ENCODE measurements at regions of chr18 and their contacts with region 1.

Region 1: DNA sequence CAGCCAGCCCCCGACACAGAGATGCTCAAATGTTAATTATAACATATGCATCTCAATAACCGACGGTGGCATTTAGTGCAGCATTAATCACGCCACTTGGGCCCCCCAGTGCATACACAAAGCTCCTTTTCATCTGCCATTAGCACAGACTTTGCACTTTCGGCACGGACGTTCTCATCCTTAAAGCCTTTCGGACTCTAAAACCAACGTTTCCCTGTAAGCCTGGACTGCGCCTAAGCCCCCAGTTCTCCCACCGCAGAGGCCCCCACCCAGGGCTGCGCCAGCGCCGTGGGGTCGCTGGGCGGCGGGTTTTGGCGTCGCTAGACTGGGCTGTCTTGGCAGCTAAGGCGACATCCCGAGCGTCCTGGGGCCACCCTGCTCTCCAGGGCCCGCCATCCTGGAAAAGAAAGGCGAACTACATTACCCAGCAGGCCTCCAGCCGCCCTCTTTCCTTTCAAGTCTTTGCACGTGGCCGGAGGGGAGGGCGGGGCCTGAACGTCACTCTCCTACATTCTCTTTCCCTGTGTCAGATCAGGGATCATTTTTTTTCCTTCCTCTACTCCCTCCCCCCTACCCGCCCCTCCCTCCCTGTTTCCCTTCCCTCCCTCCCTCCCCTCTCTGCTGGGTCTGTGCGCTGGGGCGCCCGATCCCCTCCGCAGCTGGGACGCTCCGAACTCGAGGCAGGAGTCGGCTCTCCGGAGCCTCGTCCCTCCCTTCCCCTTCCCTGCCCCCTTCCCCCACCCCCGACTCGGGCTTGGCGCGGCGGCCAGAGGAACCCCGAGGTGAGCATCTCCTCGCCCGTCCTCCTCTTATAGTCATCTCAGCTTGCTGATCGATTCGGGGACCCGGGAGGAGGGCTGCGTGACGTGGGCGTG is at the start of gene CTIF:
- DNase-seq: peak; percentile 94

Region 2: GRCh38 chr18:48629730-48630324 is 91.1 kb after region 1 on chr18:
- in situ Hi-C with region 1: loop called (anchors 25 kb)
- DNase-seq: no peak

Measured in KBM-7 (cell line).